ENCODE measurements at regions of chr4 and their contacts with region 1.

Region 1: GRCh38 chr4:13193662-13194061 is 290.5 kb downstream of the RAB28 start:
- DNase-seq: peak in 1 of 4 experiments; percentile 6
- ATAC-seq: peak; percentile 68; the same call in 2 of the 3 replicates
- H3K4me3 ChIP-seq: no peak overlapping the region
- H3K27ac ChIP-seq: no peak overlapping the region
- H3K4me1 ChIP-seq: no peaks in the 10 kb centered on the region
- H3K27me3 ChIP-seq: no peaks in the 10 kb centered on the region
- CTCF ChIP-seq: peak; percentile 29 to 39 (median 39); a peak in 4 of 6 replicates
- EP300 ChIP-seq: no peak
- POLR2A ChIP-seq: no peak
- RAD21 ChIP-seq: peak in 1 of 2 experiments; percentile 36; a peak in 2 of 4 replicates

Region 2: DNA sequence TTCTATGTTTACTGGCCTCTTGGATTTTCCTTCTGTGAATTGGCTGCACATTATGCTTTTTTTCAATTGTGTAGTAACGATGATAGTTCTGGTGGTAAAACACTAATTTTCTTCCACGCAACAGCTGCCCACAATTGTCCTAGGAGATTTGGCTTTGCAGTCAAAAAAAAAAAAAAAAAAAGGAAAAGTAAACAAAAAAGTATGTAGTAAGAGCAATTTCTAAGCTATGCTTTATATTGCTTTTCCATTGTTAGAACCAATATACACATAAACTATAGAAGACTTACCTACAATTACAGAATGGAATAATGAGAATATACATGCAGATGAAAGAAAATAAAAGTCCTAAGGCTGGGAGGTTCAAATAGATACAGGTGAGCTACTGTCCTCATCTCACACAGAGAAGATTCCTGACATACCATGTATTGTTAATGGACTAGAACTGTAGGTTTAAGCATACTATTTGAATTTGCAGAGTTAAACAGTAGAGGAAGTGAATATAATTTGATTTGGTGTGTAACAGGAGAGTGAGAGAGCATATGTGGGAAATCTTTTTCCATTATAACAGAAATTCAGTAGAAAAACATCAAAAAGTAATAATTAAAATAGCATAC is 685.7 kb before region 1 on chr4:
- CTCF ChIA-PET with region 1: no interaction called
- POLR2A ChIA-PET with region 1: no interaction called
- in situ Hi-C with region 1: no loop called
- intact Hi-C with region 1: no loop called
- DNase-seq: no peak
- ATAC-seq: no peak
- H3K4me3 ChIP-seq: no peak overlapping the region
- H3K27ac ChIP-seq: no peak overlapping the region
- H3K4me1 ChIP-seq: no peaks in the 10 kb centered on the region
- H3K27me3 ChIP-seq: no peaks in the 10 kb centered on the region
- CTCF ChIP-seq: no peak
- EP300 ChIP-seq: no peak
- POLR2A ChIP-seq: no peak
- RAD21 ChIP-seq: no peak

Region 3: GRCh38 chr4:13430834-13431568 is 237.3 kb after region 1 on chr4:
- CTCF ChIA-PET with region 1: no interaction called
- POLR2A ChIA-PET with region 1: no interaction called
- in situ Hi-C with region 1: no loop called
- intact Hi-C with region 1: loop called (anchors 10 kb)
- DNase-seq: peak in 2 of 4 experiments; percentile 37 to 55
- ATAC-seq: peak; percentile 88
- H3K4me3 ChIP-seq: no peak overlapping the region
- H3K27ac ChIP-seq: peak overlapping the region; percentile 37; the same call in 2 of the 3 replicates
- H3K4me1 ChIP-seq: peaks cover 8 to 15% of the 10 kb centered on the region in 2 experiments; a peak in 3 of 5 replicates
- H3K27me3 ChIP-seq: no peaks in the 10 kb centered on the region
- CTCF ChIP-seq: peak; percentile 47 to 80 (median 57)
- EP300 ChIP-seq: no peak
- POLR2A ChIP-seq: no peak
- RAD21 ChIP-seq: peak in 1 of 2 experiments; percentile 73; a peak in 3 of 4 replicates

Measured in K562 (cell line).